ENCODE measurements at regions of chr3 and their contacts with region 1.

Region 1: DNA sequence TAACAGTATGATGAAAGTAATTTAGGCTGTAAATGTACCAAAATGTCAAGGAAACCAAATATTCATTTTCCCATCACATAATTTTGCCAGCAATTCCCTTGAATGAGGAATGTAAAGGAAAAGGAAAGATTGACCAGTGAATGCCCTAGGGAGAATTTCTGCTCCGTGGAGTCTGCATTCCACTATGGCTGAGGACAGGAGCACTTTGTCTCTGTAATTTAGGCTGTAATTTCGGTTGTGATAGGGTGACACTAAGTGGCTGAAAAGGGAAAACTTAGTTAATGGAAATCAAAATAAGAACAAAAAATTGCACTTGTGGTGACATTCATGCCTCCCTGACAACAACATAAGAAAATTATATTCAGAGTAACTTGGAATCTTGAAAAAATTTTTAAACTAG is 8.3 kb upstream of the TMEM207 start:
- DNase-seq: peak; percentile 18
- H3K4me3 ChIP-seq: no peak overlapping the region
- H3K27ac ChIP-seq: no peak overlapping the region
- H3K4me1 ChIP-seq: peaks cover 4% of the 10 kb centered on the region
- H3K27me3 ChIP-seq: no peaks in the 10 kb centered on the region
- CTCF ChIP-seq: no peak

Region 2: DNA sequence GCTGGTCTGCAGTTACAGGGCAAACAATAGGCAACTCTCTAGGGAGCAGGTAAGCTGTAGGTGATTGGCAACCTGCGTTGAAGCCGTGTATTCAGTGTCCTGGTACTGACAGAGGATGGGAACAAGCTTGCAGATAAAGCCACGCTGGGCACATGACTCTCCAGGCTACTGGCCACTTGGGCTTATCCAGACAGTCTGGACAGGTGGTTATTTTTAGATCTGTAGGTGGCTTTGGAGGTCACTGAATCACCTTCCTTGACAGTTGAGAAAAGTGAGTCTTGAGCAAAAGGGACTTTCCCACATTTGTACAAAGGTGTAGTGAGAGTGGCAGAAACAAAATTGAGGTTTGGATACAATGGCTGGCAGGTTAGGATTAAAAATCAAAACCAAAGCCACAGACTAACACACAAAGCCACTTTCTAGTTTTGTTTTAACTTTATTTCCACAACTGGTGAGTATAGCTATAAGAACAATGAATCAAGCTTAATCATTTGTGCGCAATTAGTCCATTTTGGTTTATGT is 33.6 kb after region 1 on chr3:
- CTCF ChIA-PET with region 1: no interaction called
- dilution Hi-C with region 1: loop called (anchors 5 kb)
- in situ Hi-C with region 1: no loop called
- intact Hi-C with region 1: no loop called
- DNase-seq: peak; percentile 89
- H3K4me3 ChIP-seq: no peak overlapping the region
- H3K27ac ChIP-seq: no peak overlapping the region
- H3K4me1 ChIP-seq: peaks cover 9% of the 10 kb centered on the region
- H3K27me3 ChIP-seq: no peaks in the 10 kb centered on the region
- CTCF ChIP-seq: no peak

Region 3: GRCh38 chr3:190502946-190503345 is 44.9 kb after region 1 on chr3:
- CTCF ChIA-PET with region 1: no interaction called
- dilution Hi-C with region 1: no loop called
- in situ Hi-C with region 1: no loop called
- intact Hi-C with region 1: no loop called
- DNase-seq: no peak
- H3K4me3 ChIP-seq: no peak overlapping the region
- H3K27ac ChIP-seq: no peak overlapping the region
- H3K4me1 ChIP-seq: peaks cover 3% of the 10 kb centered on the region
- H3K27me3 ChIP-seq: no peaks in the 10 kb centered on the region
- CTCF ChIP-seq: no peak

Region 4: DNA sequence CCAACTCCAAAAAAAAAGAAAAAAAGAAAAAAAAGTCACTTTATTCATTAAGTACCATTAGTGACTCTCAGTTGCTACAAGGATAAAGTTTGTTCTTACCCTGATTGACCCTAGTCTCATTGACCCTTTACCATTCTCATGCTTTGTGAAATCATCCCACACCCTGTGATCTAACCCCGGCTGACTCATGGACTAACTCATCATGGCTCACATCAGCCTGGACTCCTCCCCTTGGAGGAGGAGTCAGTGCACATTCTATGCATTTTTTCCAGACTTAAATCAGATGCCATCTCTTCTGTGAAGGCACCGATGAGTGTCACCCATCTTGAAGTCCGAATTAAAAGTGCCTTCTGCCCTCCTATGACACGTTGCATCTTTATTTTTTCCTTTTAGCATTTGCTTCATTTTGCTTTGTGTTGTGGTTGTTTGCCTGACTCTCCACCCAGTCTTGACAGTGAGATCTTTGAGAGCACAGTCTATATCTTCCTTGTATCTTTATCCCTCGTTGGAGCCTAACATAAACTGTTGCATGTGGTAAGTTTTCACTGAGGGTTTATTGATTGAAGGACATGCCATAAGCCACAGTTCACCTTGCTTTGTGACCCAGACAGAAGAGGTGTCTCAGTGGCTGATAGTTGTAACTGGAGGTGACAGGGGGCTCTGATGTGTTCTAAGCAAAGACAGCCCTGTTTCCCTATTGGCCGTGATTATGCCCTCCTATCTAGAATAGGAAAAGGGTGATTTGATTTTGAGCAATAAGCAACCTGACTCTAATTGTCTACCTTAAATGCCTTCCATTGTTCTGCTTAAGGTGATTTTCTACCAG is 128.0 kb after region 1 on chr3:
- CTCF ChIA-PET with region 1: no interaction called
- dilution Hi-C with region 1: no loop called
- in situ Hi-C with region 1: no loop called
- intact Hi-C with region 1: no loop called
- DNase-seq: peak; percentile 96
- H3K4me3 ChIP-seq: peak overlapping the region in 2 of 3 experiments; percentile 3 to 28
- H3K27ac ChIP-seq: peak overlapping the region; percentile 94
- H3K4me1 ChIP-seq: peaks cover 28% of the 10 kb centered on the region
- H3K27me3 ChIP-seq: no peaks in the 10 kb centered on the region
- CTCF ChIP-seq: no peak

Measured in mammary epithelial cell (primary cell).